H1 (cell line): ENCODE measurements at regions of chr2 and their contacts with region 1.

Region 1: DNA sequence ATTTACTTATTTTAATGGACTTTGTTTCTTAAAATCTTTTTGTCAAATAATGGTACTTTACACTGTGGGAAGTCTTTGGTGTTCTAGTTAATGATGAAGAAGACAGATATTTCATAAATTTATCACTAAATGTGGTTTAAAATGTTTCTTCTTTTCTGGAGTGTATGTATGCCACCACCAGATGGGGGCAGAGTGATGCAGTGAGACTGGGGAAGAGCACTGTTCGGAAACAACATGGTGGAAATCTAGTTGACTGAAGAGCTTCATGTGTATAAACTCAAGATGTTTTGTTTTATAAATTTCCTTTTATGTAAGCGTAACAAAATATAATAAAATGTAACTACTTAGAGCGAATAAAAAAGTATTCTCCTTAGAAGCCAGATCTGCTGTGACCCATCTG is 195.1 kb downstream of the KCNE4 start:
- DNase-seq: no peak
- H3K4me3 ChIP-seq: no peak overlapping the region
- H3K27ac ChIP-seq: no peak overlapping the region
- H3K4me1 ChIP-seq: no peaks in the 10 kb centered on the region
- H3K27me3 ChIP-seq: no peaks in the 10 kb centered on the region
- CTCF ChIP-seq: peak in 2 of 3 experiments; percentile 32 to 55; a peak in 2 of 4 replicates
- EP300 ChIP-seq: no peak
- POLR2A ChIP-seq: no peak
- RAD21 ChIP-seq: peak; percentile 72 to 73

Region 2: GRCh38 chr2:222972420-222972819 is 274.7 kb before region 1 on chr2:
- CTCF ChIA-PET with region 1: interaction called, 11 read pairs
- POLR2A ChIA-PET with region 1: no interaction called
- DNase-seq: no peak
- H3K4me3 ChIP-seq: no peak overlapping the region
- H3K27ac ChIP-seq: no peak overlapping the region
- H3K4me1 ChIP-seq: no peaks in the 10 kb centered on the region
- H3K27me3 ChIP-seq: peaks cover 0 to 3% (median 0%) of the 10 kb centered on the region in 4 experiments; a peak in 1 of 7 replicates
- CTCF ChIP-seq: no peak
- EP300 ChIP-seq: no peak
- POLR2A ChIP-seq: no peak
- RAD21 ChIP-seq: no peak

Region 3: GRCh38 chr2:223235986-223236385 is 11.2 kb before region 1 on chr2:
- CTCF ChIA-PET with region 1: interaction called, 10 read pairs
- POLR2A ChIA-PET with region 1: no interaction called
- DNase-seq: no peak
- H3K4me3 ChIP-seq: no peak overlapping the region
- H3K27ac ChIP-seq: no peak overlapping the region
- H3K4me1 ChIP-seq: no peaks in the 10 kb centered on the region
- H3K27me3 ChIP-seq: no peaks in the 10 kb centered on the region
- CTCF ChIP-seq: no peak
- EP300 ChIP-seq: no peak
- POLR2A ChIP-seq: no peak
- RAD21 ChIP-seq: no peak

Region 4: DNA sequence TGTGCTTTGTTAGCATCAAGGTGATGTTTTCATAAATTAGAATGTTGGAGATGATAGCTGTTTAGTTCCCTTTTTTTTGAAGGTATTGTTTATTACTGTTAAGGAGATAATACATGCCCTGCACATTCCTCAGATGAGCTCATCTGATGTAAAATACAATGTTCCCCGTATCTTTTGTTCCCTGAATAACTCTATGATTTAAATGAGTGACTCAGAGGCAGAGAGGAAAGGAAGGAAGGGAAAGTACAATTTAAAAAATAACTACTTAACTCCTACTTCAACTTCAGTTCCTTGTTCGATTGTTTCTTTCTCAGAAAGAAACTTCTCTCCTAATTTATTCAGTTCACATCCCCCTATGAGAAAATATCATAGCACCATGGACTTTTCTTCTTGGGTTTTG is 13.5 kb after region 1 on chr2:
- CTCF ChIA-PET with region 1: interaction called, 19 read pairs
- POLR2A ChIA-PET with region 1: no interaction called
- DNase-seq: no peak
- H3K4me3 ChIP-seq: no peak overlapping the region
- H3K27ac ChIP-seq: no peak overlapping the region
- H3K4me1 ChIP-seq: no peaks in the 10 kb centered on the region
- H3K27me3 ChIP-seq: no peaks in the 10 kb centered on the region
- CTCF ChIP-seq: no peak
- EP300 ChIP-seq: no peak
- POLR2A ChIP-seq: no peak
- RAD21 ChIP-seq: no peak

Region 5: DNA sequence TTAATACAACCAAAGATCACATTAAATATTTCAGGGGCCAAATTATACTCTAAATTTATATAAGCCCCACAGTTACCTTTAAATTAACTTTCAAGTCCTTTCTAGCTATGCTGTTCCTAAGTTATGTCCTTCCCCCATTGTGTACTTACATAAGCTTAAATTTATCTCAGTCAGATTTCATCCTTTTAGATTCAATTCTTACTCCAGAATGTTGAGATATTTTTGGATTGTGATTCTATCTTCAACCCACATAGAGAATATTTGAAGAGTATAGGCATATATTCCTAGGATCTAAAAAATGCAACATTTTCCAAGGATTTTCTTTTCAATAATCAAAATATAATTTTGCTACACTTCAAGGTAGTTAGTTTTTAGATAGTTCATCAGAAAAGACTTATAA is 47.6 kb after region 1 on chr2:
- CTCF ChIA-PET with region 1: no interaction called
- POLR2A ChIA-PET with region 1: no interaction called
- DNase-seq: no peak
- H3K4me3 ChIP-seq: no peak overlapping the region
- H3K27ac ChIP-seq: no peak overlapping the region
- H3K4me1 ChIP-seq: no peaks in the 10 kb centered on the region
- H3K27me3 ChIP-seq: no peaks in the 10 kb centered on the region
- CTCF ChIP-seq: no peak
- EP300 ChIP-seq: no peak
- POLR2A ChIP-seq: no peak
- RAD21 ChIP-seq: no peak